Calu3 (cell line): ENCODE measurements at regions of chr11 and their contacts with region 1.

Region 1: GRCh38 chr11:120335908-120336640 is at the start of gene ARHGEF12:
- DNase-seq: peak; percentile 91
- H3K4me3 Mint-ChIP-seq: peak within 1 kb of the TSS; percentile 93
- H3K27ac Mint-ChIP-seq: peak within 1 kb of the TSS; percentile 87
- H3K4me1 Mint-ChIP-seq: peaks cover 14% of the 10 kb centered on the region
- H3K27me3 Mint-ChIP-seq: no peaks in the 10 kb centered on the region
- CTCF ChIP-seq: no peak
- total RNA-seq, gene ARHGEF12: 50.0 and 55.2 TPM in 2 replicates

Region 2: GRCh38 chr11:120400564-120401364 is 64.7 kb after region 1 on chr11:
- CTCF ChIA-PET with region 1: interaction called, 5 read pairs
- intact Hi-C with region 1: loop called (anchors 2 kb)
- DNase-seq: peak; percentile 33
- H3K4me3 Mint-ChIP-seq: peak overlapping the region; percentile 39
- H3K27ac Mint-ChIP-seq: peak overlapping the region; percentile 78
- H3K4me1 Mint-ChIP-seq: peaks cover 7% of the 10 kb centered on the region
- H3K27me3 Mint-ChIP-seq: no peaks in the 10 kb centered on the region
- CTCF ChIP-seq: no peak

Region 3: DNA sequence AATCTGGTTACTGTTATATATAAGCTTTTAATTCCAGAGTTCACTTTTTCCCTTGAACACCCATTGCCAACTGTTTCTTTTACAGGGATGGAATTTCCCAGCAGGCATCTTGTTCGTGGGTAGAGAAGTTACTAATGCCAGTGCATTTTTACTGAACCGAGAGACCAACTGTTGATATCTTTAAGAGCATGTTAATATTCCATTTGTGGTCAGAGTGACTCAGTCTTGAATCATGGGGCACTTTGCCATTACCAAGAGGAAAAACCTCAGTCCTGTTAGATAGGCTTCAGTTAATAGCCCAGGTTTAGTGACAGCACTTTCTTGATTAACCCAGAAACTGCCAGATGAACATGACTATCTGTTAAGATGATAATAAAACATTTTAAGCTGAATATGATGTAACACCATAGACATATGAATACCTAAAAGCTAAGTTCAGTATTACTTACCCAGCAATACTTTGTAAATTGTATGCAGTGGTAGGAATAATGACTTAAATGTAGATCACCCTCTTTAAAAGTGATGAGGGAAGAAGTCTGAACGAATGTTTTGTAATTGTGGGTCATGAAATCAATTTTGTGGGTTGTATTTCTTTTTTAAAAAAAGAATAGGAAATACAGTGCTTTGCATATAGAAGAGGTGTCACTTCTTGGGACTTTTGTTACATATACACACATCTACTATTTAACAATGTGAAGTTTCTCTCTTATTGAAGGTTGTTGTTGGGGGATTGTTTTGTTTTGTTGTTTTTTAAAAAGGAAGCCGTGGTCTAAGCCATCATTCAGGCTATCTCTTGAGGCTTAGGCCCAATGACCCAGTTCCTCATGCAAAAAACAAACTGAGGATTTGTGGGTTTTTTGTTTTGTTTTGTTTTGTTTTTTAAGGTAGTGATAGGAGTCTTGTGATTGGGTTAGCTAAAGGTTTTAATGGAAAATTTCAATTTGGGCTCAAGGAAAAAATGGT is 96.3 kb after region 1 on chr11:
- CTCF ChIA-PET with region 1: no interaction called
- intact Hi-C with region 1: loop called (anchors 2 kb)
- DNase-seq: peak; percentile 55
- H3K4me3 Mint-ChIP-seq: peak overlapping the region; percentile 9
- H3K27ac Mint-ChIP-seq: peak overlapping the region; percentile 82
- H3K4me1 Mint-ChIP-seq: peaks cover 23% of the 10 kb centered on the region
- H3K27me3 Mint-ChIP-seq: no peaks in the 10 kb centered on the region
- CTCF ChIP-seq: no peak

Region 4: DNA sequence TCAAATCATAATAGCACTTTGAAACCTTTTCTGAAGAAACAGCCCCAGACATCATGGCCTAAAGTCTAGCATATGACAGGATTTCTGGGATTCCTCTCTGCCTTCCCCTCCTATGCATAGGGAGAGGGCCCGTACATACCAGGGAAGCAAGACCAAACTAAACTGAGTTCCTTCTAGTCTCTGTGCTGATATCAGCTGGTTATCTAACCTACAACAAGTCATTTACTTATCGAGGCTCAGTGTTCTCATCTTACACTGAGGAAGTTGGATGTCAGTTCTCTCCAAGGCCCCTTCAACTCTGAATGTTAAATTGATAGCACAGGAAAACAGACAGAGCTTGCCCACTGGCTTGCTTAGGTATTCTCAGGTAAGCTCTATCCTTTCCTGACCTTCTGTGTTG is 158.5 kb after region 1 on chr11:
- CTCF ChIA-PET with region 1: no interaction called
- intact Hi-C with region 1: loop called (anchors 5 kb)
- DNase-seq: no peak
- H3K4me3 Mint-ChIP-seq: no peak overlapping the region
- H3K27ac Mint-ChIP-seq: no peak overlapping the region
- H3K4me1 Mint-ChIP-seq: peaks cover 8% of the 10 kb centered on the region
- H3K27me3 Mint-ChIP-seq: peaks cover 11% of the 10 kb centered on the region
- CTCF ChIP-seq: no peak

Region 5: DNA sequence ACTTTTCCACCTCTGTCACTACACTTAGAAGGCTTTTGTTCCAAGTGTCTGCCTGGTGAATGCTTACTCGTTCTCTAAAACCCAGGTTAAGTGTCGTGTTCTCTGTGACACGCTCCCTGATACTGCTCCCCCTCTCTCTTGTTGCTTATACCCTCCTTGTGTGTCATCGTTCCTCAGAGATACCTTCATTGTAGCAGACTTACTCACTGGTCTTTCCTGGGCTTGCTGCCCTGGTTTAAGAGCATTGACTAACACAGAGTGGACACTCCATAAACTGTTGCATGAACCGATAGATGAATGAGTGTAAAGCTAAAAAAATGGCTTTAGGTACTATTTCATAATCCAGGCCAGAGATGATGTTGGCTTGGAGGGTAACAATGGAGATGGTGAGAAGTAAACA is 346.8 kb after region 1 on chr11:
- CTCF ChIA-PET with region 1: no interaction called
- intact Hi-C with region 1: loop called (anchors 10 kb)
- DNase-seq: no peak
- H3K4me3 Mint-ChIP-seq: no peak overlapping the region
- H3K27ac Mint-ChIP-seq: no peak overlapping the region
- H3K4me1 Mint-ChIP-seq: no peaks in the 10 kb centered on the region
- H3K27me3 Mint-ChIP-seq: peaks cover 89% of the 10 kb centered on the region
- CTCF ChIP-seq: no peak

Region 6: DNA sequence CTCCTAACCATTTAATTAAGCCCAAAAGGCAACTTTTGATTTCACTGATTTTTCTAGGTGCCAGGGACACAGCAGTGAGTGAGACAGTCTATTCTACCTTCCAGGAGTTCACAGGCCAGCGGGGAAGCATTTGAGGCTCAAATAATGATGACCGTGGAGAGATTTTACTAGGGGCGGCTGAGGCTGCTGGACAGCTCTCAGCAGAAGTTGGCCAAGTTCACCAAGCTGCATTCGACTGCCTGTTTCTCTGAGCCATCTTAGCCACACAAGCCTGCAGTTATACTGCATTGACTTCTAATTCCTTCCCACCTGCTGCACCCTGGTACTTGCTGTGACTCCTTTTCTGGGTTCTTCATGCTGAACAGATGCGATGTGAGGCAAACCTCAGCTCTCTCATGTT is 518.9 kb after region 1 on chr11:
- CTCF ChIA-PET with region 1: no interaction called
- intact Hi-C with region 1: no loop called
- DNase-seq: no peak
- H3K4me3 Mint-ChIP-seq: no peak overlapping the region
- H3K27ac Mint-ChIP-seq: no peak overlapping the region
- H3K4me1 Mint-ChIP-seq: no peaks in the 10 kb centered on the region
- H3K27me3 Mint-ChIP-seq: peaks cover 21% of the 10 kb centered on the region
- CTCF ChIP-seq: no peak